IMR-90 (cell line): ENCODE measurements at regions of chr6 and their contacts with region 1.

Region 1: GRCh38 chr6:117449549-117450439 is 24.1 kb upstream of the ROS1 start:
- DNase-seq: peak; percentile 83
- ATAC-seq: no peak; the same call in 1 of the 2 replicates
- H3K4me3 ChIP-seq: no peak overlapping the region
- H3K27ac ChIP-seq: peak overlapping the region; percentile 47; the same call in 1 of the 2 replicates
- H3K4me1 ChIP-seq: peaks cover 12% of the 10 kb centered on the region
- H3K27me3 ChIP-seq: no peaks in the 10 kb centered on the region
- CTCF ChIP-seq: peak; percentile 82
- POLR2A ChIP-seq: no peak
- RAD21 ChIP-seq: peak; percentile 84

Region 2: DNA sequence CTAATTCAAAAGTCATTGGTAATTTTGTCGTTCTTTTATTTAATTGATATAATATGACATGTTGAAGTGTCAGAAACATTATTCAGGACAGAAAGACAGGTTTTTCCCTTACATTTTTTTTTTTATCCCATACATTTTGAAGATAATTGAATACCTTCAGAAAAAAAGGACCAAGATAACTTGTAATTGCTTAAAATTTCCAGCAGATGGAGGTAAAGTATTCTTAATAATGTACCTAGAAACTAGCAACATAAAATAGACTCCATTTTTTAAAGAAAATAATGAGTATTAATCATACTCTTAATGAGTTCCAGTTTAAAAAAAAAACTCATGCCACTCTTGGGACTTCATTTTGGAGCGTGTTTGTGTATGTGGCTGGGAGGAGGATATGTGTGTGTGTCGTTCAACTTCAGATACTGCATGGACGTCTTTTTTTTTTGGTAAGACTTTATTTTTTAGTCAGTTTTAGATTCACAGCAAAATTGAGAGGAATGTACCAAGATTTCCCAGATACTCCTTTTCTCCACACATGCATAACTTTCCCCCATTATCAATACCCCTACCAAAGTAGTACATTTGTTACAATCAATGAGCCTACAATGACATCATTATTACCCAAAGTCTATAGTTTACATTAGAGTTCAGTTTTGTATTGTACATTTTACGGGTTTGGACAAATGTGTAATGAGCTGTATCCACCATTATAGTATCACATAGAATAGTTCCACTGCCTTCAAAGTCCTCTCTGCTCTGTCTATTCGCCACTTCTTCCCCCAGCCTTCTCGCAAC is 103.5 kb before region 1 on chr6:
- CTCF ChIA-PET with region 1: no interaction called
- POLR2A ChIA-PET with region 1: no interaction called
- dilution Hi-C with region 1: no loop called
- in situ Hi-C with region 1: no loop called
- intact Hi-C with region 1: loop called (anchors 2 kb)
- DNase-seq: peak; percentile 28
- ATAC-seq: peak; percentile 67
- H3K4me3 ChIP-seq: no peak overlapping the region
- H3K27ac ChIP-seq: no peak overlapping the region
- H3K4me1 ChIP-seq: no peaks in the 10 kb centered on the region
- H3K27me3 ChIP-seq: no peaks in the 10 kb centered on the region; the same call in 1 of the 2 replicates
- CTCF ChIP-seq: peak; percentile 63
- POLR2A ChIP-seq: no peak
- RAD21 ChIP-seq: peak; percentile 59

Region 3: GRCh38 chr6:117547688-117548621 is 98.2 kb after region 1 on chr6:
- CTCF ChIA-PET with region 1: interaction called, 4 read pairs
- POLR2A ChIA-PET with region 1: no interaction called
- dilution Hi-C with region 1: no loop called
- in situ Hi-C with region 1: loop called (anchors 5 kb)
- intact Hi-C with region 1: no loop called
- DNase-seq: peak; percentile 54
- ATAC-seq: peak; percentile 44
- H3K4me3 ChIP-seq: no peak overlapping the region
- H3K27ac ChIP-seq: peak overlapping the region; percentile 74
- H3K4me1 ChIP-seq: peaks cover 22% of the 10 kb centered on the region
- H3K27me3 ChIP-seq: no peaks in the 10 kb centered on the region
- CTCF ChIP-seq: no peak
- POLR2A ChIP-seq: no peak
- RAD21 ChIP-seq: no peak

Region 4: GRCh38 chr6:117602151-117602898 is 152.5 kb after region 1 on chr6 and contains the start of gene GOPC:
- CTCF ChIA-PET with region 1: interaction called, 15 read pairs
- POLR2A ChIA-PET with region 1: interaction called, 10 read pairs
- dilution Hi-C with region 1: no loop called
- in situ Hi-C with region 1: loop called (anchors 5 kb)
- intact Hi-C with region 1: loop called (anchors 1 kb)
- DNase-seq: peak; percentile 98
- ATAC-seq: peak; percentile 97
- H3K4me3 ChIP-seq: peak within 1 kb of the TSS; percentile 90
- H3K27ac ChIP-seq: peak within 1 kb of the TSS; percentile 93
- H3K4me1 ChIP-seq: 0 out of 2 replicates have a peak, but pooled peaks cover 2% of the 10 kb centered on the region
- H3K27me3 ChIP-seq: no peaks in the 10 kb centered on the region
- CTCF ChIP-seq: peak; percentile 15; the same call in 1 of the 2 replicates
- POLR2A ChIP-seq: peak; percentile 77
- RAD21 ChIP-seq: no peak
- total RNA-seq, gene GOPC: 23.8 and 50.3 TPM in 2 replicates

Region 5: GRCh38 chr6:117674991-117675657 is 225.3 kb after region 1 on chr6 and contains the start of gene NUS1:
- CTCF ChIA-PET with region 1: no interaction called
- POLR2A ChIA-PET with region 1: no interaction called
- dilution Hi-C with region 1: no loop called
- in situ Hi-C with region 1: no loop called
- intact Hi-C with region 1: loop called (anchors 1 kb)
- DNase-seq: peak; percentile 96
- ATAC-seq: peak; percentile 99
- H3K4me3 ChIP-seq: peak within 1 kb of the TSS; percentile 51
- H3K27ac ChIP-seq: peak within 1 kb of the TSS; percentile 48; the same call in 1 of the 2 replicates
- H3K4me1 ChIP-seq: peaks cover 5% of the 10 kb centered on the region; the same call in 1 of the 2 replicates
- H3K27me3 ChIP-seq: no peaks in the 10 kb centered on the region
- CTCF ChIP-seq: peak; percentile 92
- POLR2A ChIP-seq: peak; percentile 52; the same call in 1 of the 2 replicates
- RAD21 ChIP-seq: no peak
- total RNA-seq, gene NUS1: 11.8 and 26.1 TPM in 2 replicates